Activated CD4-positive, alpha-beta T cell treated with anti-CD3 and anti-CD28 coated beads, Interleukin-2, amount 10 ng/mL, durations not matched to agents 24 days and 14 days (primary cell): ENCODE measurements at regions of chr3 and their contacts with region 1.

Region 1: GRCh38 chr3:188697127-188697526 is 474.6 kb upstream of the TPRG1 start:
- DNase-seq: no peak
- H3K4me3 Mint-ChIP-seq: no peak overlapping the region
- H3K27ac Mint-ChIP-seq: peak overlapping the region; percentile 12
- H3K4me1 Mint-ChIP-seq: peaks cover 24% of the 10 kb centered on the region
- H3K27me3 Mint-ChIP-seq: peaks cover 3% of the 10 kb centered on the region

Region 2: GRCh38 chr3:188320757-188321156 is 376.4 kb before region 1 on chr3:
- intact Hi-C with region 1: loop called (anchors 5 kb)
- DNase-seq: no peak
- H3K4me3 Mint-ChIP-seq: no peak overlapping the region
- H3K27ac Mint-ChIP-seq: peak overlapping the region; percentile 29
- H3K4me1 Mint-ChIP-seq: peaks cover 48% of the 10 kb centered on the region
- H3K27me3 Mint-ChIP-seq: peaks cover 4% of the 10 kb centered on the region

Region 3: DNA sequence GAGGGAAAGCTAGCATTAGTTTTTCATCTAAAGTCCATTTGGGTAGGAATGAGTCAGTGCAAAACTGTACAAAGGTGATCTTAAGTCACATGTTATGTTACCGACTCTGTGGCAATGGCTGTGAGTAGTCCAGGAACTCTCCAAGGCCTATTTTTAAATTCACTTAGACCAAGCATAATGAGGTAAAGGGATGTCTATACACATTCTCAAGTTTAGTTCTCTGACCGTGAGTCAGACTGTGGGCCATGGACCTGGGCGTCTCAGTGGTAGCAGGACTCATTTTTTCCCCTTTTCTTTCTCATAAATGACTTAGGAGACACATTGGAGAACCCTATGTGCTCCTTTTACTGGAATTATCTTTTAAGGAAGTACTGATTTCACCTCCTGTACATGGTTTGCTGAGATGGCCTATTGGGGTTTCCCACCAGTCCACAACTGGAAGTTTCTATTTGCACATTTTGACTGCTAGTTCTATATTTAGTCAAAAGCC is 14.1 kb before region 1 on chr3:
- intact Hi-C with region 1: loop called (anchors 1 kb)
- DNase-seq: no peak
- H3K4me3 Mint-ChIP-seq: no peak overlapping the region
- H3K27ac Mint-ChIP-seq: peak overlapping the region; percentile 47
- H3K4me1 Mint-ChIP-seq: peaks cover 28% of the 10 kb centered on the region
- H3K27me3 Mint-ChIP-seq: no peaks in the 10 kb centered on the region

Region 4: DNA sequence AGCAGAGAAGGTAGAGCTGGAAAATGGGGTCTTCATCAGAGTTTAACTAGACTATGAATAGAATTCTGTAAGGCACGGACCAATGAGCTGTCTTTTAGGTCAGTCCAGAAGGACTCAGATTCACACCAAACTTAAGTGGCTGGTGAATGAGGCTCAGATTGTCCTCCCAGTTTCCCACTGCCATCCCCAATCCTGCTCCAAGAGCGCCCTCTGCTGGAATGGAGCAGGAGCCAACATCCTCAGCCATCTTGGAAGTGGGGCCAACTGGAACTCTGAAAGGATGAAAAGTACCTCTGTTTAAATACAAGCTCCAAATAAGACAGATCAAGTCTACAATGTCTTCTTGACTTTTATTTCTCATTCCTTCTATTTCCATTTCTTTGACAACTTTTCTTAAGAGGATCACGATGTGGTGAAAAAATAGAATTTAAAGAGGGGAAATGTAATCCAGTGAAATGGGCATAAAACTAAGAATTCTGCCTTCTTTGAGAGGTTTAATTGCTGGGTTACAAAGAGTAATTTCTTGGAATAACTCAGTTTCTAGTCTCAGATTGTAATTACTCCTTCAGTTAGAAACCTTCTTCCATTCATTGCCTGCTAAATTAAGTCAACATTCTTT is 257.6 kb after region 1 on chr3:
- intact Hi-C with region 1: loop called (anchors 5 kb)
- DNase-seq: peak; percentile 94
- H3K4me3 Mint-ChIP-seq: no peak overlapping the region
- H3K27ac Mint-ChIP-seq: peak overlapping the region; percentile 10
- H3K4me1 Mint-ChIP-seq: peaks cover 27% of the 10 kb centered on the region
- H3K27me3 Mint-ChIP-seq: peaks cover 6% of the 10 kb centered on the region